GM12878 (cell line): ENCODE measurements at regions of chr1 and their contacts with region 1.

Region 1: GRCh38 chr1:220776720-220777326 is 9.9 kb upstream of the MTARC1 start:
- DNase-seq: no peak
- ATAC-seq: peak; percentile 93
- H3K4me3 ChIP-seq: no peak overlapping the region
- H3K27ac ChIP-seq: no peak overlapping the region
- H3K4me1 ChIP-seq: no peaks in the 10 kb centered on the region
- H3K27me3 ChIP-seq: no peaks in the 10 kb centered on the region
- CTCF ChIP-seq: peak; percentile 92 to 96 (median 94)
- EP300 ChIP-seq: no peak
- POLR2A ChIP-seq: no peak
- RAD21 ChIP-seq: peak; percentile 86

Region 2: GRCh38 chr1:220281159-220281574 is 495.7 kb before region 1 on chr1:
- CTCF ChIA-PET with region 1: interaction called, 35 read pairs
- POLR2A ChIA-PET with region 1: no interaction called
- RAD21 ChIA-PET with region 1: interaction called, 6 read pairs
- SMC1A ChIA-PET with region 1: interaction called, 9 read pairs
- in situ Hi-C with region 1: no loop called
- intact Hi-C with region 1: loop called (anchors 5 kb)
- DNase-seq: no peak
- ATAC-seq: peak; percentile 78
- H3K4me3 ChIP-seq: no peak overlapping the region
- H3K27ac ChIP-seq: no peak overlapping the region
- H3K4me1 ChIP-seq: no peaks in the 10 kb centered on the region
- H3K27me3 ChIP-seq: peaks cover 0 to 2% of the 10 kb centered on the region in 2 experiments; a peak in 1 of 4 replicates
- CTCF ChIP-seq: peak; percentile 24 to 52 (median 40); a peak in 5 of 6 replicates
- EP300 ChIP-seq: no peak
- POLR2A ChIP-seq: no peak
- RAD21 ChIP-seq: peak; percentile 77

Region 3: DNA sequence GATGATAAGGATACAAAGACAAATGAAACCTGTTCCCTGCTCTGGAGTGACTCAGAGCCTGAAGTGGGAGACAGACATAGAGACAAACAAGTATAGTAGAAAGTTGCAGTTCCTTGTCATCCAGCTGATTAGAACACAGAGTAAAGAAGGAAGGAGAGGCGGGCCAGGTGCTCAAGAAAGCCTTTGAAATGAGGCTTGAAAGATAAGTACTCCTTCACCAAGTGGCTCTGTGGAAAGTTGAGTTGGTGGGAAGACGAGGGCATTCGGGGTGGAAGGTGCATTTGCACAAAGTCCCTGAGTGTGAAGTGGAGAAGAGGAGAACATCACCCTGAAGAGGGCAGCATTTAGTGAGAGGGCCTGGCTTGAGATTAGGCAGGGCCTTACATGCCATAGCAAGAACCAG is 231.9 kb before region 1 on chr1:
- CTCF ChIA-PET with region 1: no interaction called
- POLR2A ChIA-PET with region 1: no interaction called
- RAD21 ChIA-PET with region 1: no interaction called
- SMC1A ChIA-PET with region 1: interaction called, 4 read pairs
- in situ Hi-C with region 1: no loop called
- intact Hi-C with region 1: loop called (anchors 10 kb)
- DNase-seq: no peak
- ATAC-seq: peak; percentile 70
- H3K4me3 ChIP-seq: no peak overlapping the region
- H3K27ac ChIP-seq: no peak overlapping the region
- H3K4me1 ChIP-seq: no peaks in the 10 kb centered on the region
- H3K27me3 ChIP-seq: no peaks in the 10 kb centered on the region
- CTCF ChIP-seq: peak in 2 of 3 experiments; percentile 24 to 25; a peak in 2 of 6 replicates
- EP300 ChIP-seq: no peak
- POLR2A ChIP-seq: no peak
- RAD21 ChIP-seq: no peak

Region 4: GRCh38 chr1:220631238-220631832 is 145.5 kb before region 1 on chr1:
- CTCF ChIA-PET with region 1: no interaction called
- POLR2A ChIA-PET with region 1: no interaction called
- RAD21 ChIA-PET with region 1: no interaction called
- SMC1A ChIA-PET with region 1: no interaction called
- in situ Hi-C with region 1: no loop called
- intact Hi-C with region 1: no loop called
- DNase-seq: no peak
- ATAC-seq: no peak
- H3K4me3 ChIP-seq: no peak overlapping the region
- H3K27ac ChIP-seq: no peak overlapping the region
- H3K4me1 ChIP-seq: no peaks in the 10 kb centered on the region
- H3K27me3 ChIP-seq: no peaks in the 10 kb centered on the region
- CTCF ChIP-seq: no peak
- EP300 ChIP-seq: no peak
- POLR2A ChIP-seq: no peak
- RAD21 ChIP-seq: no peak

Region 5: GRCh38 chr1:220690140-220691025 is 86.4 kb before region 1 on chr1 and contains the start of gene C1orf115:
- CTCF ChIA-PET with region 1: interaction called, 21 read pairs
- POLR2A ChIA-PET with region 1: no interaction called
- RAD21 ChIA-PET with region 1: interaction called, 3 read pairs
- SMC1A ChIA-PET with region 1: interaction called, 4 read pairs
- in situ Hi-C with region 1: loop called (anchors 10 kb)
- intact Hi-C with region 1: loop called (anchors 1 kb)
- DNase-seq: no peak
- ATAC-seq: peak; percentile 98
- H3K4me3 ChIP-seq: peak within 1 kb of the TSS; percentile 44; the same call in 1 of the 2 replicates
- H3K27ac ChIP-seq: no peak within 1 kb of the TSS
- H3K4me1 ChIP-seq: no peaks in the 10 kb centered on the region
- H3K27me3 ChIP-seq: 0 out of 4 replicates have a peak, but pooled peaks cover 0 to 1% of the 10 kb centered on the region in 2 experiments
- CTCF ChIP-seq: peak; percentile 76 to 95 (median 85)
- EP300 ChIP-seq: no peak
- POLR2A ChIP-seq: no peak
- RAD21 ChIP-seq: peak; percentile 54
- polyA plus RNA-seq, gene C1orf115: 0.52 to 0.95 TPM

Region 6: DNA sequence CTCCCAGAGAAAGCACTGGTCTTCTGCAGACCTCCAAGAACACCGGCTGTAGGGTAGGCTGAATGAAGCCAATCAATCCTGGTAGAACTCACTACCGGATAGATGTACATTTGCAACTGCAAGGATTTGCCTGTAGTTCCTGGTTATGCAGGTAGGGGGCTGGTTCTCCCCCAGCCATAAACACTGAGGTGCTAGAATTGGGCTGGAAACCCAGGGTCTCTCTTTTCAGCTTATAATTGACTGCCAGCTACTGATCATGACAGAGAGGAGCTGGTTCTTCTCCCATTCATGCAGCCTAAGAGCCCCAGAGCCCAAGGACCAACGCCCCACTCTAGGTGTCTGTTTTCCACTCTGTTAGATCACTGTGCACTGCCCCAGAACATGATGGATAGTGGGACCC is 50.2 kb before region 1 on chr1:
- CTCF ChIA-PET with region 1: interaction called, 10 read pairs
- POLR2A ChIA-PET with region 1: no interaction called
- RAD21 ChIA-PET with region 1: no interaction called
- SMC1A ChIA-PET with region 1: no interaction called
- in situ Hi-C with region 1: no loop called
- intact Hi-C with region 1: no loop called
- DNase-seq: no peak
- ATAC-seq: peak; percentile 83
- H3K4me3 ChIP-seq: no peak overlapping the region
- H3K27ac ChIP-seq: no peak overlapping the region
- H3K4me1 ChIP-seq: no peaks in the 10 kb centered on the region
- H3K27me3 ChIP-seq: no peaks in the 10 kb centered on the region
- CTCF ChIP-seq: peak; percentile 14 to 49 (median 37); a peak in 4 of 6 replicates
- EP300 ChIP-seq: no peak
- POLR2A ChIP-seq: no peak
- RAD21 ChIP-seq: no peak

Region 7: DNA sequence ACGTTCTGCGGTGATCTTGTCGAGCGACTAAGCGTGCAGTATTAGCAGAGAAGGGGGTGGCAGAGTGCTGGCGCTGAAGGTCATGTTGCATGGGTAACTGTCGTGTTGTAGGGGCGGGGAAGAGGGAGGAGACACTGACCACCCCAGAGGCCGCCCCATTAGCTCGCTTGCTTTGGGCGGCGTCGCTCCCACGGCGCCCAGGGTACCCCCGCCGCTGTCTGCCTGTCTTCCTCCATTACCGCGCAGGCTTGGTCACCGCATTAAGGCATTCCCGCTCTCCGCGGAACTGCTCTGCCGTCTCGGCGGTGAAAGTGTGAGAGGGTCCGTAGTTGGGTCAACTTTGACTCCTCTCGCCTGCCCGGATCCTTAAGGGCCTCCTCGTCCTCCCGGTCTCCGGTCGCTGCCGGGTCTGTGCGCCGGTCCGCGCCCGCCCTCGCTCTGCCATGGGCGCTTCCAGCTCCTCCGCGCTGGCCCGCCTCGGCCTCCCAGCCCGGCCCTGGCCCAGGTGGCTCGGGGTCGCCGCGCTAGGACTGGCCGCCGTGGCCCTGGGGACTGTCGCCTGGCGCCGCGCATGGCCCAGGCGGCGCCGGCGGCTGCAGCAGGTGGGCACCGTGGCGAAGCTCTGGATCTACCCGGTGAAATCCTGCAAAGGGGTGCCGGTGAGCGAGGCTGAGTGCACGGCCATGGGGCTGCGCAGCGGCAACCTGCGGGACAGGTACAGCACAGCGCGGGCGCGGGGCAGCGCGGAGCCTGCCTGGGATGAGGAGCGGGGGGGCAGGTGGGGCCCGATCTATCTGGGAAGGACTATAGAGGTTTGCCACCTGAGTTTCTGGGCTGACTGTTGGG is 28.5 kb before region 1 on chr1 and contains the start of gene MTARC2:
- CTCF ChIA-PET with region 1: interaction called, 12 read pairs
- POLR2A ChIA-PET with region 1: no interaction called
- RAD21 ChIA-PET with region 1: no interaction called
- SMC1A ChIA-PET with region 1: no interaction called
- in situ Hi-C with region 1: no loop called
- intact Hi-C with region 1: no loop called
- DNase-seq: no peak
- ATAC-seq: peak; percentile 90
- H3K4me3 ChIP-seq: no peak within 1 kb of the TSS
- H3K27ac ChIP-seq: no peak within 1 kb of the TSS
- H3K4me1 ChIP-seq: no peaks in the 10 kb centered on the region
- H3K27me3 ChIP-seq: peaks cover 2 to 10% of the 10 kb centered on the region in 2 experiments; a peak in 2 of 4 replicates
- CTCF ChIP-seq: no peak
- EP300 ChIP-seq: no peak
- POLR2A ChIP-seq: peak; percentile 30; the same call in 1 of the 2 replicates
- RAD21 ChIP-seq: no peak
- polyA plus RNA-seq, gene MTARC2: 2.8 to 4.5 TPM

Region 8: DNA sequence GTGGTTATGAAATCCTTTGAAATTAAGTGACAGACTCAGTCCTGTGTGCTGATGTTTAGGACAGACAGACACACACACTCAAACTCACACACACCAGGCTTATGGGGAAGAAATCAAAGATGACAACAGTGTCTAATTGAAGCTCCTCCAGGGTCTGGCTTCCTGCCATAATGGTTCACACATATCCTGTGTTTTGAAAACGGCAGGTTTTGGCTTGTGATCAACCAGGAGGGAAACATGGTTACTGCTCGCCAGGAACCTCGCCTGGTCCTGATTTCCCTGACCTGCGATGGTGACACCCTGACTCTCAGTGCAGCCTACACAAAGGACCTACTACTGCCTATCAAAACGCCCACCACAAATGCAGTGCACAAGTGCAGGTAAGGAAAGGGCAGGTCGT is 14.5 kb after region 1 on chr1:
- CTCF ChIA-PET with region 1: interaction called, 12 read pairs
- POLR2A ChIA-PET with region 1: no interaction called
- RAD21 ChIA-PET with region 1: no interaction called
- SMC1A ChIA-PET with region 1: interaction called, 3 read pairs
- in situ Hi-C with region 1: no loop called
- intact Hi-C with region 1: no loop called
- DNase-seq: no peak
- ATAC-seq: no peak
- H3K4me3 ChIP-seq: no peak overlapping the region
- H3K27ac ChIP-seq: no peak overlapping the region
- H3K4me1 ChIP-seq: no peaks in the 10 kb centered on the region
- H3K27me3 ChIP-seq: peaks cover 0 to 2% of the 10 kb centered on the region in 2 experiments; a peak in 2 of 4 replicates
- CTCF ChIP-seq: no peak
- EP300 ChIP-seq: no peak
- POLR2A ChIP-seq: no peak
- RAD21 ChIP-seq: no peak